Caco-2 (cell line): ENCODE measurements at regions of chr11 and their contacts with region 1.

Region 1: GRCh38 chr11:96168623-96169022 is 174.4 kb downstream of the MAML2 start:
- DNase-seq: no peak
- H3K4me3 ChIP-seq: no peak overlapping the region
- H3K4me3 Mint-ChIP-seq: no peak overlapping the region
- H3K27ac Mint-ChIP-seq: no peak overlapping the region
- H3K4me1 ChIP-seq: peaks cover 14% of the 10 kb centered on the region
- H3K4me1 Mint-ChIP-seq: peaks cover 30% of the 10 kb centered on the region
- H3K27me3 ChIP-seq: no peaks in the 10 kb centered on the region
- H3K27me3 Mint-ChIP-seq: no peaks in the 10 kb centered on the region
- CTCF ChIP-seq: no peak

Region 2: DNA sequence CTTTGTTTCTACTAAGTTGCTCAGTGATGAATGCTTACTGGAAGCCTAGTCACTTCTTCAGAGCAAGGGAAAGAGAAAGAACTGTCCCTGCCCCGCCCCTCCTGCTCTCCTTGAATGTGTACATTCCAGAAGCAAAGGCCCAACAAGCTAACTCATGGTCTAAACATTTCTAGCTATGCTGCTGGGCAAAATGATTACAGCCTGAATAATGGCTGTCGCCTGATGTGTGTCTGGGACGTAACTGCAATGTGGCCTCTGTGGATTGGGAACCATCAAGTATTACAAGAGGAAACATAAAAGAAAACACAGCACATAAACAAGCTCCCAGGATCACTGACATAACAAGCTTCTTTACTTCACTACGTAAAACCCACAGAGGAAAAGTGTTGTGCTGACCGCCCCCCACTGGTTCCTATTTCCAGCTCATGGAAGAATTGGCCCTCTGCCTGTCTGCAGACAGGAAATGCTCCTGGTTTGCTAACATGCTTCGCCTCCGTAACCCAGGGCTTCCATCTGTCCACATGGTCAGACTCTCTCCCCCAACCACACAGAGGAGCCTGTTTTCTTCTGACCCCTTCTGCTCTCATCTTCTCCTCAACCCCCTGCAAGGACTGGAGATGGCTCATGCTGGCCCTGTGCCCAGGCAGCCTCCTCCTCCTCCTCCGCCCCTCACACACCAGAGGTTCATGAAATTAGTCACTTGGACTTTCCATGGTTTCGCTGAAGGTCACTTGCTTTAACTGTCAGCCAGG is 12.8 kb before region 1 on chr11:
- CTCF ChIA-PET with region 1: no interaction called
- POLR2A ChIA-PET with region 1: no interaction called
- intact Hi-C with region 1: loop called (anchors 1 kb)
- DNase-seq: peak; percentile 79 to 82
- H3K4me3 ChIP-seq: no peak overlapping the region
- H3K4me3 Mint-ChIP-seq: no peak overlapping the region
- H3K27ac Mint-ChIP-seq: peak overlapping the region; percentile 77
- H3K4me1 ChIP-seq: peaks cover 35% of the 10 kb centered on the region
- H3K4me1 Mint-ChIP-seq: peaks cover 17% of the 10 kb centered on the region
- H3K27me3 ChIP-seq: no peaks in the 10 kb centered on the region
- H3K27me3 Mint-ChIP-seq: no peaks in the 10 kb centered on the region
- CTCF ChIP-seq: peak in 1 of 2 experiments; percentile 40